ENCODE measurements at regions of chr20 and their contacts with region 1.

Region 1: DNA sequence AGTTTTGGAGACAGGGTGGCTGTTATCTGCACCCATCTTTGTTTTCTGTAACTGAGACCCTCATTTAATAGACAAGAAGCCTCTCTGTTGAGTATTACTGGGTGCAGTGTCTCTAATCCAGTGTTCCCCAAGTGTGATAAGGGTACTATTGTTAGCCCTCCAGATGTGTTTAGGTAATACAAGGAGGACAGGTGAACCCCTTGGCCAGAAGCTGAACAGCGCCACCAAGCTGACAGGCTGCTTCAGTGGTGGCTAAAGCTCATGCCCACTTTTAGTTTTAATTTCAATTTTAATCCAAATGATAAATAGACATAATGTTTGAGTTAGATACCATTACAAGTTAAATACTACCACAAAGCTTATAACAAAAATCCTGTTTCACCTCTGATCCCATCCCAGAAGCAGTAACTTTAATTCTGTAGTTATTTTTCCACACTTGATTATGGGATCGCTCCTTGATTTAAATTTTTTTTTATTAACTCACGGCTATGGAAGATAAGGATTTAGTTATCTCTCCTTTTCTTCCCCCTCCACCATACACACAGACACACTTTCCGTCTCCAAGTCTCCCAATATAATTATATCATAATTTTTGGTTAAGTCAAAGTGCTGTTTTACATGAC is 8.4 kb upstream of the STK35 start:
- DNase-seq: no peak
- H3K4me3 ChIP-seq: no peak overlapping the region
- H3K27ac ChIP-seq: no peak overlapping the region
- H3K27me3 ChIP-seq: peaks cover 0 to 28% (median 0%) of the 10 kb centered on the region in 45 donors
- CTCF ChIP-seq: peak in 46 of 56 donors; percentile 14 to 63 (median 40)

Region 2: GRCh38 chr20:1965520-1966351 is 127.5 kb before region 1 on chr20:
- intact Hi-C with region 1: loop called in 1 of 2 experiments (anchors 10 kb)
- DNase-seq: peak; percentile 67 to 85 (median 82)
- H3K4me3 ChIP-seq: peak overlapping the region in 55 of 59 donors; percentile 2 to 58 (median 35)
- H3K27ac ChIP-seq: peak overlapping the region in 17 of 59 donors; percentile 1 to 64 (median 17)
- H3K27me3 ChIP-seq: no peaks in the 10 kb centered on the region
- CTCF ChIP-seq: peak; percentile 86 to 99 (median 96)

Region 3: DNA sequence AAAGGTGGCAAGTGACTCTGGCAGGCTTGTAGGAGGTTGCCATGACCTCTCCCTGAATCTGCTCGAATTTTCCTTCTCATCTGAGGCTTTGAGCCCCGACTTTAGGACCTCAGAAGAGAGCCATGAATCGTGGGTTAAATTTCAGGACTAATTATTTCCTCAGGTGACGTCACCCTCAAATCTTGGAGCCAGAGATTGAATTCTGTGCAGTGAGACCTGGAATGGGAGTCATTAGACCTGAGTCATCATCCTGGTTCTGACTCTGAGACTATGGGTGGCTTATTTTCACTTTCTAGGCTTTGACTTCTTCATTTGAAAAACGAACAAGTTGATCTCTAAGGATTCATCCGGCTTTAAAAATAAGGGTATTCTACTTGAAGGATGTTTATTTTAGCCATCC is 50.9 kb before region 1 on chr20:
- intact Hi-C with region 1: no loop called
- DNase-seq: no peak
- H3K4me3 ChIP-seq: no peak overlapping the region
- H3K27ac ChIP-seq: no peak overlapping the region
- H3K27me3 ChIP-seq: peaks cover 0 to 2% (median 0%) of the 10 kb centered on the region in 45 donors
- CTCF ChIP-seq: no peak

Region 4: DNA sequence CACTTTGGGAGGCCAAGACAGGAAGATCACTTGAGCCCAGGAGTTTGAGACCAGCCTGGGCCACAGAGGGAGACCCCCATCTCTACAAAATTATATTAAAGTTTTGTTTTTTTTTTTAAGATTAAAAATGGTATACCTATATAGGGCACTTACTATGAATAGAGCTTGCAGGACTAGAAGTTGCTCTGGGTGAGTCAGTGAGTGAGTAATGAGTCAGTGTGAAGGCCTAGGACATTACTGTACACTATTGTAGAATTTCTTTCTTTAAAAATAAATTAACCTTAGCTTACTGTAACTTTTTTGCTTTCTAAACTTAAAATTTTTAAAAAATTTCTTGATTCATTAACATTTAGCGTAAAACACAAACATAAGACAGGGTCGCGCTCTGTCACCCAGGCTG is 38.1 kb after region 1 on chr20:
- intact Hi-C with region 1: no loop called
- DNase-seq: no peak
- H3K4me3 ChIP-seq: peak overlapping the region in 3 of 59 donors; percentile 8 to 51 (median 21)
- H3K27ac ChIP-seq: peak overlapping the region in 56 of 59 donors; percentile 11 to 96 (median 88)
- H3K27me3 ChIP-seq: no peaks in the 10 kb centered on the region
- CTCF ChIP-seq: no peak

Measured in dorsolateral prefrontal cortex (tissue), 120 donors.